Calu3 (cell line): ENCODE measurements at regions of chr1 and their contacts with region 1.

Region 1: GRCh38 chr1:164617377-164618201 is 58.6 kb downstream of the PBX1 start:
- DNase-seq: peak; percentile 54
- H3K4me3 Mint-ChIP-seq: no peak overlapping the region
- H3K27ac Mint-ChIP-seq: no peak overlapping the region
- H3K4me1 Mint-ChIP-seq: peaks cover 21% of the 10 kb centered on the region
- H3K27me3 Mint-ChIP-seq: no peaks in the 10 kb centered on the region
- CTCF ChIP-seq: peak; percentile 73

Region 2: DNA sequence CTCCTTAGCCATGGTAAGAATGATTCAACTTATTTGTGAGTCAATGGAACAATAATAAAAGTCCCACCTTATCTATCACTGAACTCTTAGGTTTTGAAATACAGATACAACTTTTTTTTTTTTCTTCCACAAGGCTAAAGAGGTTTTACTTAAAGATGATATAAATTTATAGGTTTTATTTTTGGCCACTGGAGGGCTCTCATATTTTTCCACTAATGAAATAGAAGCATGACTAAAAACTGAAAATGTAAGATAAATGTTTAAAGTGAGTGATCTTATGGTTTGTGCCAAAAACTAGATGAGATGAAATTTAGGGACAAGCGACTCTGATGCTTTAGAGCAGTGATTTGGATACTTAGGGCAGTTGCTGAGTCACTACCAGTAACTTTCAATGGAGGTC is 796.8 kb before region 1 on chr1:
- CTCF ChIA-PET with region 1: no interaction called
- intact Hi-C with region 1: loop called (anchors 10 kb)
- DNase-seq: no peak
- H3K4me3 Mint-ChIP-seq: no peak overlapping the region
- H3K27ac Mint-ChIP-seq: no peak overlapping the region
- H3K4me1 Mint-ChIP-seq: no peaks in the 10 kb centered on the region
- H3K27me3 Mint-ChIP-seq: no peaks in the 10 kb centered on the region
- CTCF ChIP-seq: no peak

Region 3: GRCh38 chr1:164337885-164338284 is 279.7 kb before region 1 on chr1:
- CTCF ChIA-PET with region 1: no interaction called
- intact Hi-C with region 1: loop called (anchors 10 kb)
- DNase-seq: no peak
- H3K4me3 Mint-ChIP-seq: no peak overlapping the region
- H3K27ac Mint-ChIP-seq: no peak overlapping the region
- H3K4me1 Mint-ChIP-seq: no peaks in the 10 kb centered on the region
- H3K27me3 Mint-ChIP-seq: no peaks in the 10 kb centered on the region
- CTCF ChIP-seq: no peak

Region 4: GRCh38 chr1:164510435-164510834 is 107.2 kb before region 1 on chr1:
- CTCF ChIA-PET with region 1: no interaction called
- intact Hi-C with region 1: loop called (anchors 1 kb)
- DNase-seq: no peak
- H3K4me3 Mint-ChIP-seq: no peak overlapping the region
- H3K27ac Mint-ChIP-seq: no peak overlapping the region
- H3K4me1 Mint-ChIP-seq: no peaks in the 10 kb centered on the region
- H3K27me3 Mint-ChIP-seq: peaks cover 6% of the 10 kb centered on the region
- CTCF ChIP-seq: no peak

Region 5: GRCh38 chr1:164675342-164675904 is 57.8 kb after region 1 on chr1:
- CTCF ChIA-PET with region 1: no interaction called
- intact Hi-C with region 1: no loop called
- DNase-seq: peak; percentile 39
- H3K4me3 Mint-ChIP-seq: no peak overlapping the region
- H3K27ac Mint-ChIP-seq: no peak overlapping the region
- H3K4me1 Mint-ChIP-seq: peaks cover 29% of the 10 kb centered on the region
- H3K27me3 Mint-ChIP-seq: no peaks in the 10 kb centered on the region
- CTCF ChIP-seq: no peak

Region 6: GRCh38 chr1:164786980-164787833 is 169.6 kb after region 1 on chr1:
- CTCF ChIA-PET with region 1: interaction called, 3 read pairs
- intact Hi-C with region 1: loop called (anchors 2 kb)
- DNase-seq: peak; percentile 81
- H3K4me3 Mint-ChIP-seq: no peak overlapping the region
- H3K27ac Mint-ChIP-seq: no peak overlapping the region
- H3K4me1 Mint-ChIP-seq: peaks cover 17% of the 10 kb centered on the region
- H3K27me3 Mint-ChIP-seq: no peaks in the 10 kb centered on the region
- CTCF ChIP-seq: peak; percentile 92

Region 7: GRCh38 chr1:165073185-165074007 is 455.8 kb after region 1 on chr1:
- CTCF ChIA-PET with region 1: no interaction called
- intact Hi-C with region 1: loop called (anchors 2 kb)
- DNase-seq: peak; percentile 47
- H3K4me3 Mint-ChIP-seq: no peak overlapping the region
- H3K27ac Mint-ChIP-seq: no peak overlapping the region
- H3K4me1 Mint-ChIP-seq: no peaks in the 10 kb centered on the region
- H3K27me3 Mint-ChIP-seq: peaks cover 23% of the 10 kb centered on the region
- CTCF ChIP-seq: peak; percentile 60